ENCODE measurements at regions of chr1 and their contacts with region 1.

Region 1: DNA sequence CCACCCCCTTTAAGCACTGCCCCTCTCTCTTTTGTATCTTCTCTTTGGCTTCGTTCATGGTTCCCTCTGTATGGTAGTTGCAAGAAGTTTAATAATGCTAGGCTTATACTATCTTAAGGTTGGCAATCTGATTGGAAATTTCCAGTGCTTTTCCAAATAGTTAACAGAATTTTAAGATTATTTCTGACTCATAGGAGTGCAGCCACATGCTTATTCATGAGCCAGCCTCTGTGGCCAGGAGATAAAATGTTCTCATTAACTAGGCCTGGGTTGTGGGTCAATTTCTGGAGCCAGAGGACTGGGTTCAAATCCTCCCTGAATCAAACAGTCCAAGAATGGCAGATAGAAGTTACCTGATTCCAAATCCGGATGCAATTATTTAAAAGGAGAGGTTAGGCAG is 103.1 kb downstream of the ATP6V1G3 start:
- DNase-seq: peak; percentile 30

Region 2: GRCh38 chr1:198416296-198416695 is 21.0 kb before region 1 on chr1:
- intact Hi-C with region 1: loop called in 1 of 2 experiments (anchors 1 kb)
- DNase-seq: no peak

Region 3: DNA sequence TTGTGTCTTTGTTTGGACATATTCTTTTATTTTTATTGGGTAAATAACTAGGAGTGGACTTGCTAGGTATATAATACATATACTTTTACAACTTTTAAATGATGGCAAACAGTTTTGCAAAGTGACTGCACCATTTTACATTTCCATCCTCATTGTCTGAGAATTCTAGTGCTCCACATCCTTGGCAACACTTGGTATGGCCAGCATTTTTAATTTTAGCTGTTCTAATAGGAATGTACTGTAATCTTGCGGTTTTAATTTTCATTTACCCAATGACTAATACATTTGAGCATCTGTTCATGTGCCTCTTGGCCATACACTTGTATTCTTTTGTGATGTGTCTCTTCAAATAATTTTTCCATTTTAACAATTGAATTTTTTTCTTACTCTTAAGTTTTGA is 140.1 kb after region 1 on chr1:
- intact Hi-C with region 1: no loop called
- DNase-seq: no peak